PC-9 (cell line): ENCODE measurements at regions of chr19 and their contacts with region 1.

Region 1: GRCh38 chr19:23542571-23542970 is 144.4 kb downstream of the ZNF675 start:
- DNase-seq: no peak
- H3K4me3 ChIP-seq: no peak overlapping the region
- H3K27ac ChIP-seq: no peak overlapping the region
- H3K4me1 ChIP-seq: peaks cover 28% of the 10 kb centered on the region
- H3K27me3 ChIP-seq: no peaks in the 10 kb centered on the region
- CTCF ChIP-seq: no peak

Region 2: DNA sequence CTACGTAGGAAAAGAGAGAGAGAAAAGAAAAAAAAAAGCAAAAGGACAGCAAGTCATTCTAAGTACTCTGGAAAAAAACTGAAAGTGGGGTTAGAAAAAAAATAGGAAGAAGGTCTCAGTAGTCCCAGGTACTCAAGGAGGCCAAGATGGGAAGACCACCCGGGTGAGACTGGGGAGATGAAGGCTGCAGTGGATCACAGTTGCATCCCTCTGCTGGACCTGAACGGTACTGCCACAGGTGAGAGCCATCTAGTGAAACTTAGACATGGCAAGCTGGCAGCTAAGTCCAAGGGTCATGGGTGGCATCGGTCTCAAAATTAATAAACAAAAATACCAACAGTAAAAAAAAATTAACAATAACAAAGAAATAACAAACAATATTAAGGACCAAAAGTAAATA is 106.3 kb before region 1 on chr19:
- CTCF ChIA-PET with region 1: interaction called, 23 read pairs
- POLR2A ChIA-PET with region 1: no interaction called
- intact Hi-C with region 1: no loop called
- DNase-seq: peak in 1 of 2 experiments; percentile 17
- H3K4me3 ChIP-seq: no peak overlapping the region
- H3K27ac ChIP-seq: no peak overlapping the region
- H3K4me1 ChIP-seq: no peaks in the 10 kb centered on the region
- H3K27me3 ChIP-seq: no peaks in the 10 kb centered on the region
- CTCF ChIP-seq: peak; percentile 56

Region 3: DNA sequence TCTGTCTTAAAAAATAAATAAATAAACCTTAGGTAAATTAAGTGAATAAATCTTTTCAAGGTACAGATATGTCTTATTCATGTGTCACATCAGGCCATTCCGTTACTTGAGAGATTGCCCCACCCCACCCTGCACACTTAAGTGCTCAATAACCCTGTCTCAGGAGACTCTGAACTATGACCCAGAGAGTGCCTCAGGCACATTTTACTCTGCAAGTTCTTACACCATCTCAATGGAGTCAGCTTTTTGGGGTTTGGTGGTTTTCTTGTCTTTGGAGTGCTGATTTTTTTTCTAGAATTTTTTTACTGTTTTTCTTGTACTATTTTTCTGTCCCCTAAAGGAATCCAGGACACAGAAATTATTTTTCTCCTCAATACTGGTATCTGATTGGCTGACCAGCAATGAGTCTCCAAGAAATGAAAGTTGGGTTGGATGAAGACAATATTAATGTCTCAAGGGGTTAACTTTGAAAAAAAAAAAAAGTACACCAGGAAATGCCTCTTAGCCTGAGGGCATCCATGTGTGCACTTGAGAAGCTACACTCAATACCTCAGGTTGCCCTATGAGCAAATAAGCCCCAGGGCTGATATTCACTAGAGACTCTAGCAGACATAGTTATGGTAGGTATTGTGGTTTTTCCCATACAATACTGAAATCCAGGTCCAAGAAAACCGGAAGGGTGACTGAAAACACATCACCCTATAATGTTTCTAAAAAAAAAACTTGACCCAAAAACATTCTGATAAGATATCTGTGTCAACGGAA is 32.7 kb before region 1 on chr19:
- CTCF ChIA-PET with region 1: no interaction called
- POLR2A ChIA-PET with region 1: interaction called, 13 read pairs
- intact Hi-C with region 1: loop called (anchors 1 kb)
- DNase-seq: peak; percentile 74 to 99
- H3K4me3 ChIP-seq: no peak overlapping the region
- H3K27ac ChIP-seq: peak overlapping the region; percentile 65
- H3K4me1 ChIP-seq: peaks cover 22% of the 10 kb centered on the region
- H3K27me3 ChIP-seq: no peaks in the 10 kb centered on the region
- CTCF ChIP-seq: no peak